ENCODE measurements at regions of chr14 and their contacts with region 1.

Region 1: GRCh38 chr14:104752735-104753531 is at the start of gene SIVA1:
- DNase-seq: peak; percentile 100
- ATAC-seq: peak; percentile 95 to 97 (median 95)
- H3K4me3 ChIP-seq: peak within 1 kb of the TSS; percentile 68 to 100 (median 87)
- H3K27ac ChIP-seq: peak within 1 kb of the TSS in 11 of 12 donors; percentile 58 to 95 (median 88)
- H3K4me1 ChIP-seq: peaks cover 0 to 34% (median 24%) of the 10 kb centered on the region in 12 donors
- H3K27me3 ChIP-seq: no peaks in the 10 kb centered on the region
- CTCF ChIP-seq: no peak
- POLR2A ChIP-seq: peak; percentile 81 to 92
- total RNA-seq, gene SIVA1: 41.0 to 203 (median 53.9) TPM

Region 2: DNA sequence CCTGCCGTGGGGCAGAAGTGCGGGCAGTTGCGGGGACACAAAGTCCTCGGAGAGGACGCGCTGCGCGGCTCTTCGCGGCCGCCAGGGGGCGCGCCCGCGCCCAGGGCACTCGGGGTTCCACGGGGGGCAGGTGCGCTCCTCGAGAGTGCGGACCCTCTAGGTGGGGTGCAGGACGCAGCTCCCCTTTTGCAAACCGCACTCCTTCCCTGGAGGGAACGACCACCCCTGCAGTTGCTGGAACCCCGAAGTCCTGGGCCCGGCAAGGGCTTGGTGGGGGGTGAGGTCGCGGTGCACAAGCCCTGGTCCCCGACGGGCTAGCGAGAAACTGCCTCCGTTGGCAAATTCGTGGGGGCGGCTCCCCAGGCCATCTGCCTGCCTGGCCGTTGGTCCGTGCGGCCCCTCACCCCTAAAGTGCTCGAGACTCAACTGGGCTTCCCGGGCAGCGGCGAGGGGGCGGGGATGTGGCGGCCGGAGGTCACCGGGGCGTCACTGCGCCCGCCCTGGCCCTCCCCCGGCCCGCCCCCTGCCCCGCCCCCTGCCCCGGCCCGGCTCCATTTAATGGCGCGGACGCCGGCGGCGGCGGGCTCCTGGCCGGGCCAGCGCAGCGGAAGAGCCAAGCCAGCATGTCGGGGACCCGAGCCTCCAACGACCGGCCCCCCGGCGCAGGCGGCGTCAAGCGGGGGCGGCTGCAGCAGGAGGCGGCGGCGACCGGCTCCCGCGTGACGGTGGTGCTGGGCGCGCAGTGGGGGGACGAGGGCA is 29.1 kb before region 1 on chr14 and contains the start of gene ADSS1:
- intact Hi-C with region 1: loop called in 1 of 10 experiments (anchors 1 kb)
- DNase-seq: peak; percentile 82 to 89 (median 83)
- ATAC-seq: peak in 3 of 4 donors; percentile 34 to 59 (median 57)
- H3K4me3 ChIP-seq: peak within 1 kb of the TSS; percentile 63 to 96 (median 78)
- H3K27ac ChIP-seq: peak within 1 kb of the TSS; percentile 77 to 98 (median 90)
- H3K4me1 ChIP-seq: peaks cover 3 to 80% (median 42%) of the 10 kb centered on the region in 12 donors
- H3K27me3 ChIP-seq: no peaks in the 10 kb centered on the region
- CTCF ChIP-seq: peak; percentile 82 to 97 (median 92)
- POLR2A ChIP-seq: peak in 1 of 2 donors; percentile 58
- total RNA-seq, gene ADSS1: 78.9 to 247 (median 160) TPM

Region 3: DNA sequence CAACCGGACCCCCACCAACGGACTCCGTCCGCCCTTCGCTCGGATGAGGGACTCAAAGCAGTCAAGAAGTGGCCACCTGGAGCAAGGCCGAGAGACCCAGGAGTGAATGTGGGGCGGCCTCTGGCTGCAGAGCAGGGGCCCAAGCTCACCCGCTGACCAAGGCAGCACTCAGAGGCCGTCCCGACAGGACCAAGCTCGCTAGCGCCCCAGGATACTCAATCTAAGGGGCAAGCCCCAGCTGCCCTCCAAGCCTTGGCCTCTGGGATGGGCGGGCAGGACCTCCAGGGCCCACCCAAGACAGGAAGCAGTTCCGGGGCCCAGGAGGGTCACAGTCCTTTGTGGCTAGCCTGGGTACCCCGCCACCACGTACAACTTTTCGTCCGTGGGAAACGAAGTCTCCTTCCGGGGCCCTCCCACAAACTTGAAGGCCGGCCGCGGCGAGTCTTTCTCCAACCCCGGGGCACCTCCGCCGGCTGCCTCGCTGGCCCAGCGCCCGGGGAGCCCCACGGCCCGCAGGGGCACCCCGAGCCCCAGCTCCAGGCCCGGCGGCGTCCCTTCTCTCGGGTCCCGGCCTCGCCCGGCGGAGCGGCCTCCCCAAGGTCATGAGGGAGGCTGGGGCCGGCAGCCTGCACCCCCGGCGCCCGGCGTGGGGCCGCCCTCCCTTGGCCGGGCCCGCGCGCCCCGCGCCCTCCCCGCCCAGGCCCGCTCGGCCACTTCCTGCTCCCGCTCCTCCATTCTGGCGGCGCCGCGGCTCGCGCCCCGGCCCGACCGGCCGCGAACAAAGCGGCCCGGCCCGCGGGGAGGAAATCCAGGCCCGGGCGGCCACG is 41.9 kb after region 1 on chr14:
- intact Hi-C with region 1: loop called in 1 of 10 experiments (anchors 5 kb)
- DNase-seq: peak in 3 of 5 donors; percentile 45 to 51 (median 46)
- ATAC-seq: peak in 3 of 4 donors; percentile 1 to 25 (median 15)
- H3K4me3 ChIP-seq: peak overlapping the region; percentile 47 to 98 (median 80)
- H3K27ac ChIP-seq: peak overlapping the region; percentile 41 to 92 (median 80)
- H3K4me1 ChIP-seq: peaks cover 6 to 80% (median 59%) of the 10 kb centered on the region in 12 donors
- H3K27me3 ChIP-seq: no peaks in the 10 kb centered on the region
- CTCF ChIP-seq: no peak
- POLR2A ChIP-seq: no peak

Measured in heart left ventricle (tissue), 16 donors.